Pancreas (tissue), 10 donors: ENCODE measurements at regions of chr7 and their contacts with region 1.

Region 1: GRCh38 chr7:27921081-27921836 is 181.3 kb downstream of the TAX1BP1 start:
- DNase-seq: peak in 3 of 6 donors; percentile 52 to 59 (median 59)
- ATAC-seq: peak; percentile 92 to 98 (median 96)
- H3K4me3 ChIP-seq: peak overlapping the region in 2 of 4 donors; percentile 12 to 24
- H3K27ac ChIP-seq: no peak overlapping the region
- H3K4me1 ChIP-seq: peaks cover 0 to 6% (median 0%) of the 10 kb centered on the region in 3 donors
- H3K27me3 ChIP-seq: no peaks in the 10 kb centered on the region
- CTCF ChIP-seq: peak in 3 of 4 donors; percentile 17 to 39 (median 34)

Region 2: GRCh38 chr7:27196287-27196767 is 724.9 kb before region 1 on chr7:
- intact Hi-C with region 1: loop called in 2 of 3 experiments (anchors 10 kb)
- DNase-seq: peak in 5 of 6 donors; percentile 47 to 90 (median 71)
- ATAC-seq: peak in 3 of 4 donors; percentile 48 to 63 (median 63)
- H3K4me3 ChIP-seq: no peak overlapping the region
- H3K27ac ChIP-seq: no peak overlapping the region
- H3K4me1 ChIP-seq: peaks cover 0 to 17% (median 6%) of the 10 kb centered on the region in 3 donors
- H3K27me3 ChIP-seq: peaks cover 0 to 88% (median 41%) of the 10 kb centered on the region in 4 donors
- CTCF ChIP-seq: peak; percentile 15 to 69 (median 60)

Region 3: GRCh38 chr7:27689591-27690164 is 231.6 kb before region 1 on chr7:
- intact Hi-C with region 1: loop called in 1 of 3 experiments (anchors 10 kb)
- DNase-seq: peak in 1 of 6 donors; percentile 14
- ATAC-seq: peak in 3 of 4 donors; percentile 69 to 79 (median 71)
- H3K4me3 ChIP-seq: no peak overlapping the region
- H3K27ac ChIP-seq: no peak overlapping the region
- H3K4me1 ChIP-seq: no peaks in the 10 kb centered on the region
- H3K27me3 ChIP-seq: no peaks in the 10 kb centered on the region
- CTCF ChIP-seq: no peak